ENCODE measurements at regions of chr19 and their contacts with region 1.

Region 1: GRCh38 chr19:1540365-1540925 is 16.6 kb downstream of the PLK5 start:
- DNase-seq: no peak
- H3K4me3 ChIP-seq: no peak overlapping the region
- H3K27ac ChIP-seq: no peak overlapping the region
- H3K4me1 ChIP-seq: no peaks in the 10 kb centered on the region
- H3K27me3 ChIP-seq: peaks cover 2% of the 10 kb centered on the region
- CTCF ChIP-seq: no peak
- POLR2A ChIP-seq: no peak

Region 2: DNA sequence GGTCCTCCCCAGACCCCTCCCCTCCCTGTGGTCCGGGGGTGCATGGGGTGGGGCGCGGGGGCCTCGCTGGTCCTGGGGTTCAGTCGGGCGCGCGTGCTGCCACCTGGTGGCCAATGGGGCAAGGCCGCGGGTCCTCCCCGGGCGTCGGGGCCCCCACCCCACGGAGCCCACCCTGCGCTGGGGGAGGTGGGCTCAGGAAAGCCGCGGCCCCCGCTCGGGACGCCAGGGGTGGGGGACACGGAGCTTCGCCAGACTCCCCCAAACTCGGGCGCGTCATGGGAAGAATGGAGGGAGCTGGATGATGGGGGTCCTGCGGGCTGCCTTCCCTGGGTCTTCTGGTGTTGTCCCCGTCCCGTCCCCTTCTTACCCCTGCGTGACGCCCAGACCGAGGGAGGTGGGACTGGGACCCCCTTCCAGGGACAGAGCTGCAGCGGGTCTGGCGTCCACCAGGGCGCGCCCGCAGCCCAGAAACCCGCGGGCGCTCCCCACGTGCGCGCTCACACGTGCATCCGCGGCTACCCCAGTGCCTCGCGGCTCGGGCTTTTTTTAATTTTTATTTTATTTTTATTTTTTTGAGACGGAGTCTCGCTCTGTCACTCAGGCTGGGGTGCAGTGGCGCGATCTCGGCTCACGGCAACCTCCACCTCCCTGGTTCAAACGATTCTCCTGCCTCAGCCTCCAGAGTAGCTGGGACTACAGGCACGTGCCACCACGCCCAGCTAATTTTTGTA is 131.8 kb after region 1 on chr19:
- intact Hi-C with region 1: loop called (anchors 5 kb)
- DNase-seq: no peak
- H3K4me3 ChIP-seq: no peak overlapping the region
- H3K27ac ChIP-seq: no peak overlapping the region
- H3K4me1 ChIP-seq: no peaks in the 10 kb centered on the region
- H3K27me3 ChIP-seq: peaks cover 34% of the 10 kb centered on the region
- CTCF ChIP-seq: peak; percentile 60 to 81 (median 70)
- POLR2A ChIP-seq: no peak

Region 3: DNA sequence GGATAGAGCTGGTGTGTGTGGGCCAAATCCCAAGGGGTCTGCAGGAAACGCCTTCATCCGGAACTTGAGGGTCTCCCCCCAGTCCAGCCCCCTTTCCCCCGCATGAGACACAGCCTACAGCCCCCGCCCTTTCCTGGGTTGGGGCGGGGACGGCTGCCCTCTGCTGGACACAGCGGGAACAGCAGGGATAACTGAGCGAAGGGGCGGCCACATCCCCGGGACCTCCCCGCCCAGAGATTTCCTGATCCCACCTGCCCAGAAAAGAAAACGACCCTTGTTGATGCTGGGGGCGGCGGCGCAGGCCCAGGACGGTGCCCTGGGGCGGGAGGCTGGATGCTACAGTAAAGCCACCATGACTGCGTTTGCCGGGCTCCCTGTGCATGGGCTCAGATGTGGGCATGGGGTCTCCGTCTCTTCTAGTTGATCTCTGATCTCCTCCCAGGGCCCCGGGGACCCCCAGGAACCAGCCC is 227.1 kb after region 1 on chr19:
- intact Hi-C with region 1: loop called (anchors 10 kb)
- DNase-seq: no peak
- H3K4me3 ChIP-seq: no peak overlapping the region
- H3K27ac ChIP-seq: no peak overlapping the region
- H3K4me1 ChIP-seq: no peaks in the 10 kb centered on the region
- H3K27me3 ChIP-seq: peaks cover 63% of the 10 kb centered on the region
- CTCF ChIP-seq: peak; percentile 75 to 90 (median 80)
- POLR2A ChIP-seq: no peak

Region 4: GRCh38 chr19:1825909-1826556 is 285.6 kb after region 1 on chr19:
- intact Hi-C with region 1: loop called (anchors 10 kb)
- DNase-seq: peak; percentile 57
- H3K4me3 ChIP-seq: no peak overlapping the region
- H3K27ac ChIP-seq: no peak overlapping the region
- H3K4me1 ChIP-seq: no peaks in the 10 kb centered on the region
- H3K27me3 ChIP-seq: no peaks in the 10 kb centered on the region
- CTCF ChIP-seq: peak; percentile 73 to 92 (median 88)
- POLR2A ChIP-seq: no peak

Measured in prostate gland (tissue), 2 donors.